CD8-positive, alpha-beta T cell (primary cell): ENCODE measurements at regions of chr14 and their contacts with region 1.

Region 1: DNA sequence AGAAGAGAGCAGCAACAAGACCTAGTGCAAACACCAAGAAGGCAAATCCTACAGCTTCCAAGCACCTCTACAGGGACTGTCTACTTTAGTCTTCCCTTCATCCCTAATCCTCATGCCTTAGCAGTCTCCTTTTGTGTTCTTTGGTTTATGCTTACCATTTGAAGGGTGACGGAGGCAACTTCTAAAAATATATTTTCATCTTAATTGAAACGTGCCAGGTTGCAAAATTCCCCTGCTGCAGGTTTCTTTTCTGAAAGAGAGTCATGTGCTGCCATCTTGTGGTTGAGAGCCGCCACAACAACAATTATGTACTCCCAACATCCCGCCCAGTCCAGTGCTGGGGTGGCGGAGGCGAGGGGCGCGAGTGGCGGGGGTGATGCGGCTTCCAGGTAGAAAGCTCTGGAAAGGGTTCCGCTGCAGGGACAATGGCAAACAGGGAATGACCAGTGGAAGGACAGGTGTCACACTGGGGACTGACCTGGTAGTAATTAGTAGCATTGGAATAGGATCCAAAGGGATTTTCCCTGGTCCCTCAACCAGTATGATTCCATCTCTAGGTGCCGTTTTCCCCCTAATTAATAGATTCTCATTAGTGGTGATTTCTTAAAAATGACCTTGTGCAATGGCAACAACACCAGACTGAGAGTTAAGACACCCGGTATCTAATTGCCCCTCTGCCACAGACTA is 80.3 kb upstream of the GNG2 start:
- DNase-seq: peak; percentile 51 to 83 (median 72)
- ATAC-seq: peak; percentile 71
- H3K4me3 ChIP-seq: no peak overlapping the region
- H3K4me3 Mint-ChIP-seq: peak overlapping the region; percentile 15
- H3K27ac ChIP-seq: no peak overlapping the region
- H3K27ac Mint-ChIP-seq: no peak overlapping the region
- H3K4me1 ChIP-seq: peaks cover 4% of the 10 kb centered on the region
- H3K4me1 Mint-ChIP-seq: peaks cover 21% of the 10 kb centered on the region
- H3K27me3 ChIP-seq: no peaks in the 10 kb centered on the region
- H3K27me3 Mint-ChIP-seq: peaks cover 5% of the 10 kb centered on the region
- CTCF ChIP-seq: peak; percentile 92

Region 2: DNA sequence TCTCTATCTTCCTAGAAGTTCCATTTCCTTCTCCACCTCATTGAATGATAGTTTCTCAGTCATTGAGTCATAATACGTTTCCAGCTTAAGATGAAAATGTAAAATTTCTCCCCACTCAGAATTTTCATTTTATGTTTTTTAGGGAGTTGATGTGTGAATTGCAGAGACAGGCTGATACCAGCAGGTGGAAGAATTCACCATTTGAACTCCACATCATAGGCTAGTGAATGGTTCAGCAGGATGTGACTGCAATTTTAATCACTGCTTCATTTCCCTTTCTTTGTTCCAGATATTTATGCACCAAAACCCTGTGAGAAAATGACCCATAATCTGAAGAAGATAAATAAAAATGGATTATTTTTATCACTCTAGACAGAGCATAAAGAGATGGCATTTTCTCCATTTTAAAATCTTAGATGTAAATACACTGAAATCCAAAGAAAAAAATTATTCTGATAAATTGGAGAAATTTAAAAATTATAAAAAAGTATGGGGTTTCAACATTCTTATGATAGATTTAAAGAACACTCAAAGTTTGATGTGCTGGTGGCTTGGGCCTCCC is 825.3 kb before region 1 on chr14:
- CTCF ChIA-PET with region 1: no interaction called
- POLR2A ChIA-PET with region 1: no interaction called
- intact Hi-C with region 1: loop called (anchors 2 kb)
- DNase-seq: peak in 2 of 9 experiments; percentile 13 to 35
- ATAC-seq: peak; percentile 38
- H3K4me3 ChIP-seq: no peak overlapping the region
- H3K4me3 Mint-ChIP-seq: no peak overlapping the region
- H3K27ac ChIP-seq: no peak overlapping the region
- H3K27ac Mint-ChIP-seq: no peak overlapping the region
- H3K4me1 ChIP-seq: no peaks in the 10 kb centered on the region
- H3K4me1 Mint-ChIP-seq: no peaks in the 10 kb centered on the region
- H3K27me3 ChIP-seq: no peaks in the 10 kb centered on the region
- H3K27me3 Mint-ChIP-seq: no peaks in the 10 kb centered on the region
- CTCF ChIP-seq: peak; percentile 28

Region 3: DNA sequence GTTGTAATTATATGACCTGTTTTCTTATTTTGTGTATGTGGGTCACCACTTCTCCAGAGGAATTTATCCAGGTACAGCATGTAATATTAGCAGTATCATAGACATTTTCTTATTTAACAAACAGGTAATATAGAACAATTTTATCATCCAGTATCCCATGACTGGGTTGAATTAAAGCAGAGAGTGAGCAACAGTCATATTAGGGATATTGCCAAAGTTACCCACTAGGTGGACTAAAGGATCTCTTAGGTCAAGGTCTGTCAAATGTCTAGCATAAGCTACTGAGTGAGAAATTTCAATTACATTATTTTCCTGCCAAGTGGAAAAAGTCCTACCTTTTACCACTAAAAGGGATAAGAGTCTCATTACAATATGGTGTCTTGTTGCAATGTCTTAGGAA is 623.1 kb before region 1 on chr14:
- CTCF ChIA-PET with region 1: no interaction called
- POLR2A ChIA-PET with region 1: no interaction called
- intact Hi-C with region 1: loop called in 1 of 2 experiments (anchors 5 kb)
- DNase-seq: peak in 2 of 9 experiments; percentile 4 to 8
- ATAC-seq: no peak
- H3K4me3 ChIP-seq: no peak overlapping the region
- H3K4me3 Mint-ChIP-seq: no peak overlapping the region
- H3K27ac ChIP-seq: no peak overlapping the region
- H3K27ac Mint-ChIP-seq: no peak overlapping the region
- H3K4me1 ChIP-seq: no peaks in the 10 kb centered on the region
- H3K4me1 Mint-ChIP-seq: no peaks in the 10 kb centered on the region
- H3K27me3 ChIP-seq: no peaks in the 10 kb centered on the region
- H3K27me3 Mint-ChIP-seq: no peaks in the 10 kb centered on the region
- CTCF ChIP-seq: no peak

Region 4: DNA sequence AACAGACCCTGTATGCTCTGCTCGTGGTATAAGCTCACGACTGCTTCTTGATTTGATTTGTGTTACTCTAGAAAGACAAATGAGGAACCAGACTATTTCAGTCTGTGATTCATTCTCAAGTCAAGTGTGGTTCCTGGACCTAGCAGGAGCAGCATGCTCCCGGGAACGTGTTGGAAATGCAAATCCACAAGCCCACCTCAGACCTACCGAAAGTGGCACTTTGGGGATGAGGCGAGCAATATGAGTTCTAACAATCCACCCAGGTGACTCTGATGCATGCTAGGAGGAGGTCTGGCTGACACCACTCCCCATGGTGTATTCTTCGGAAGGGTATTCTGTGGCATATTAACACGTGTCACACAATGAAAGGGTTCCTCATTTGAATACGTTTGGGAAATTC is 599.6 kb before region 1 on chr14:
- CTCF ChIA-PET with region 1: no interaction called
- POLR2A ChIA-PET with region 1: no interaction called
- intact Hi-C with region 1: no loop called
- DNase-seq: no peak
- ATAC-seq: no peak
- H3K4me3 ChIP-seq: no peak overlapping the region
- H3K4me3 Mint-ChIP-seq: no peak overlapping the region
- H3K27ac ChIP-seq: no peak overlapping the region
- H3K27ac Mint-ChIP-seq: no peak overlapping the region
- H3K4me1 ChIP-seq: no peaks in the 10 kb centered on the region
- H3K4me1 Mint-ChIP-seq: no peaks in the 10 kb centered on the region
- H3K27me3 ChIP-seq: no peaks in the 10 kb centered on the region
- H3K27me3 Mint-ChIP-seq: peaks cover 10% of the 10 kb centered on the region
- CTCF ChIP-seq: no peak

Region 5: DNA sequence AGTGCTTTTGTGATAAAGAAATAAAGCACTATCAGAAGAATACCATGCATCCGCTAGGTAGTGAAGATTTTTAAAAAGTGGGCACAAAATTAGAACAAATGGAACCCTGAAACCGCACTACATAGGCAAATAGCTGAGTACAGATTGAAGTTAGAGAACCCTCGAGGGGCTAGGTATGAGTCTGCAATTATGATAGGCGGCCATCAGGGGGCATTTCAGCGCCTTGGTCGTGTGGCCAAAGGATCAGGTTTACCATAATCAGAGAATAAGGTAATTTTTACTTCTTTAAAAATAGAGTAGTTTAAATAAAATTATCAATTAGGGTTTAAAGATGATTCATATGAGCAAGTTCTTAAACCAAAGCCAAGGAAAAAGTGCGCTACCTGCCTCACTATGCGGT is 410.3 kb before region 1 on chr14:
- CTCF ChIA-PET with region 1: interaction called, 12 read pairs
- POLR2A ChIA-PET with region 1: no interaction called
- intact Hi-C with region 1: loop called in 1 of 2 experiments (anchors 1 kb)
- DNase-seq: peak in 3 of 9 experiments; percentile 7 to 33 (median 24)
- ATAC-seq: no peak
- H3K4me3 ChIP-seq: no peak overlapping the region
- H3K4me3 Mint-ChIP-seq: no peak overlapping the region
- H3K27ac ChIP-seq: no peak overlapping the region
- H3K27ac Mint-ChIP-seq: no peak overlapping the region
- H3K4me1 ChIP-seq: no peaks in the 10 kb centered on the region
- H3K4me1 Mint-ChIP-seq: no peaks in the 10 kb centered on the region
- H3K27me3 ChIP-seq: no peaks in the 10 kb centered on the region
- H3K27me3 Mint-ChIP-seq: peaks cover 7% of the 10 kb centered on the region
- CTCF ChIP-seq: peak; percentile 19

Region 6: DNA sequence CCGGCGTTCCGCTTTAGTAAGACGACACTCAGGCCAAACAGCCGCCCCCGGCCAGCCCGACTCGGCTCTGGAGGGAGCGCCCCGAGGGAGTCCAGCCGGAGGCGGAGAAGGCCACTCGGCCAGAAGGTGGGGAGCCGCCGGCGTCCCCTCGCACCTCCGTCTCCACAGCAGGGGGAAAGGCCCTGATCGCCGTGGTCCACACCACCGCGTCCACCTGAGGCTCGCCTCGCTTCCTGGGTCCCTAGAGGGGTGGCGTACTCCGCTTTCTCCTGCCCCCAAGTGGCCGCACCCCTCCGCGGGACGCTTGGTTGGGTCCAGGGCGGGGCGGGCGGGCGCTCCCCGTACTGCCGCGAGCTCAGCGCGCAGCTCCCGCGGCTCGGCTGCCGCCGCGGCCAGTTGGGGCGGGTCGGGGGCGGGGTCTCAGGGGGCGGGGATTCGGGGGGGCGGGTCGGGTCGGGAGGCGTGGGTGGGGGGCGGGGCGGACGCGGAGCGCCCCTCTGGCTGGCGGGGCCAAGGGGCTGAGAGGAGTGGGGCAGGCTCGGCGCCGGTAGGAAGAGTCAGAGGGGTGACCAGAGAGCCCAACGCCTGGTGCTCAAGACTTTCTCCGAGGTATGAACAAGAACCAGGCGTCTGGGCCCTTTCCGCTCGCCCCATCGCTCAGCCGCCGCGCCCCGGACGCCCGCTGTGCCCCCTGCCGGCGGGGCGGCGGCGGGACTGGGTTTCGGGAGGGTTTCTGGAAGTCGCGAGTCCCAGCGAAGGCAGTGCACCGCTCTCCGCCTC is 128.6 kb before region 1 on chr14 and contains the start of gene FRMD6:
- CTCF ChIA-PET with region 1: no interaction called
- POLR2A ChIA-PET with region 1: no interaction called
- intact Hi-C with region 1: loop called in 1 of 2 experiments (anchors 5 kb)
- DNase-seq: peak; percentile 58 to 90 (median 76)
- ATAC-seq: peak; percentile 82
- H3K4me3 ChIP-seq: peak within 1 kb of the TSS; percentile 87 to 94
- H3K4me3 Mint-ChIP-seq: peak within 1 kb of the TSS; percentile 85
- H3K27ac ChIP-seq: peak within 1 kb of the TSS; percentile 55 to 73
- H3K27ac Mint-ChIP-seq: peak within 1 kb of the TSS; percentile 73
- H3K4me1 ChIP-seq: peaks cover 19% of the 10 kb centered on the region
- H3K4me1 Mint-ChIP-seq: peaks cover 17% of the 10 kb centered on the region
- H3K27me3 ChIP-seq: peaks cover 6 to 16% of the 10 kb centered on the region in 2 experiments
- H3K27me3 Mint-ChIP-seq: peaks cover 21% of the 10 kb centered on the region
- CTCF ChIP-seq: peak; percentile 70
- total RNA-seq, gene FRMD6: 2.4 to 3.5 TPM

Region 7: GRCh38 chr14:51979088-51979709 is 199.1 kb after region 1 on chr14:
- CTCF ChIA-PET with region 1: interaction called, 47 read pairs
- POLR2A ChIA-PET with region 1: no interaction called
- intact Hi-C with region 1: loop called in 1 of 2 experiments (anchors 1 kb)
- DNase-seq: peak; percentile 62 to 90 (median 82)
- ATAC-seq: peak; percentile 86
- H3K4me3 ChIP-seq: no peak overlapping the region
- H3K4me3 Mint-ChIP-seq: no peak overlapping the region
- H3K27ac ChIP-seq: no peak overlapping the region
- H3K27ac Mint-ChIP-seq: no peak overlapping the region
- H3K4me1 ChIP-seq: peaks cover 9% of the 10 kb centered on the region
- H3K4me1 Mint-ChIP-seq: peaks cover 6% of the 10 kb centered on the region
- H3K27me3 ChIP-seq: no peaks in the 10 kb centered on the region
- H3K27me3 Mint-ChIP-seq: no peaks in the 10 kb centered on the region
- CTCF ChIP-seq: peak; percentile 97

Region 8: GRCh38 chr14:52313903-52314594 is 533.9 kb after region 1 on chr14 and contains the start of gene PTGER2:
- CTCF ChIA-PET with region 1: no interaction called
- POLR2A ChIA-PET with region 1: no interaction called
- intact Hi-C with region 1: no loop called
- DNase-seq: peak; percentile 46 to 88 (median 73)
- ATAC-seq: peak; percentile 61
- H3K4me3 ChIP-seq: peak within 1 kb of the TSS; percentile 85 to 93
- H3K4me3 Mint-ChIP-seq: peak within 1 kb of the TSS; percentile 99
- H3K27ac ChIP-seq: peak within 1 kb of the TSS; percentile 70 to 71
- H3K27ac Mint-ChIP-seq: peak within 1 kb of the TSS; percentile 92
- H3K4me1 ChIP-seq: peaks cover 65% of the 10 kb centered on the region
- H3K4me1 Mint-ChIP-seq: peaks cover 83% of the 10 kb centered on the region
- H3K27me3 ChIP-seq: no peaks in the 10 kb centered on the region
- H3K27me3 Mint-ChIP-seq: peaks cover 10% of the 10 kb centered on the region
- CTCF ChIP-seq: no peak
- total RNA-seq, gene PTGER2: 3.5 to 4.3 TPM